Mammary epithelial cell (primary cell): ENCODE measurements at regions of chr9 and their contacts with region 1.

Region 1: DNA sequence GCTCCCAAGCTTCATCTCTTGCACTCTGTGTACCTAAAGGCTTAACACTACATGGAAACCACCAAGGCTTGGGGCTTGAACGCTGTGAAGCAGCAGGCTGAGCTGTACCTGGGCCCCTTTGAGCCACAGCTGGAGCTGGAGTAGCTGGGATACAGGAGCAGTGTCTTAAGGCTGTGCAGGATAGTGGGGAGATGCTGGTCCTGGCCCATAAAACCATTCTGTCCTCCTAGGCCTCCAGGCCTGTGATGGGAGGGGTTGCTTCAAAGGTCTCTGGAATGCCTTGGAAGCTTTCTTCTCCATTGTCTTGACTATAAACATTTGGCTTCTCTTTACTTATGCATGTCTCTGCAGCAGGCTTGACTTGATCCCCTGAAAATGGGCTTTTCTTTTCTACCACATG is 42.3 kb upstream of the DAPK1 start:
- DNase-seq: no peak
- H3K4me3 ChIP-seq: no peak overlapping the region
- H3K27ac ChIP-seq: no peak overlapping the region
- H3K4me1 ChIP-seq: no peaks in the 10 kb centered on the region
- H3K27me3 ChIP-seq: no peaks in the 10 kb centered on the region
- CTCF ChIP-seq: no peak

Region 2: GRCh38 chr9:87259543-87260518 is 195.6 kb before region 1 on chr9:
- CTCF ChIA-PET with region 1: no interaction called
- dilution Hi-C with region 1: no loop called
- in situ Hi-C with region 1: no loop called
- intact Hi-C with region 1: no loop called
- DNase-seq: no peak
- H3K4me3 ChIP-seq: no peak overlapping the region
- H3K27ac ChIP-seq: no peak overlapping the region
- H3K4me1 ChIP-seq: peaks cover 7% of the 10 kb centered on the region
- H3K27me3 ChIP-seq: no peaks in the 10 kb centered on the region
- CTCF ChIP-seq: no peak

Region 3: DNA sequence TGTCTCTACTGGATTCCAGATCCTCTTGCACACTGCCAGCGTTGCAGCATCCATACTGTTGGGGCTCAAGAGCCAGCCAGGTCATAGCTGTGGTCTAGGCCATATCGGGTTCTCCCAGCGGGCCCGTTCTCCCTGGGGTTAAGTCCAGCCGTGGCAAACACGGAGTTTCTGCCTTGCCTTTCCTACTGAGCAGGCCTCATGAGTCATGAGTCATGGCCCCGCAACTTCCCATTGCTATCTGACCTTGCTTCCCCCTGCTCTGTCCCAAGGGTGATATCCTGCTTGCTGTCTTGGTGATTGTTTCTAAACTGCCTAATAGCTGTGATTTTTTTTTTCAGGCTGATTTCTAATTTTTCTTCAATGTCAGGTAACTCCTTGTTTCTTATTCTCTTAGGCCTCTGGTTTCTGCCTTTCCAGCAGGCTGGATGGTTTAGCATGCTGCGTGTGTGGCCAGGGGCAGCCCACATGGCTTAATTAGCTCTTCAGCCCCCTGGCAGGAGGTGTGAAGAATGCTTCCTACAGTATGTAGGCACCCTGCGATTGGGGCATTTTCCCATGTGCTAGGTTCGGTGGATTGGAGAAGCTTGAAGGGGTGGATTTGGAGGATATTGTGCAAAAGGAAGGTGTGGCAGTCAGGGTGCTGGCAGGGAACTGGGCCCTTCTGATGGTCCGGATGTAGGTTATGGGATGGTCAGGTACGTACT is 61.0 kb after region 1 on chr9:
- CTCF ChIA-PET with region 1: no interaction called
- dilution Hi-C with region 1: no loop called
- in situ Hi-C with region 1: no loop called
- intact Hi-C with region 1: no loop called
- DNase-seq: no peak
- H3K4me3 ChIP-seq: no peak overlapping the region
- H3K27ac ChIP-seq: no peak overlapping the region
- H3K4me1 ChIP-seq: no peaks in the 10 kb centered on the region
- H3K27me3 ChIP-seq: no peaks in the 10 kb centered on the region
- CTCF ChIP-seq: no peak

Region 4: GRCh38 chr9:87529671-87530070 is 74.3 kb after region 1 on chr9:
- CTCF ChIA-PET with region 1: no interaction called
- dilution Hi-C with region 1: loop called (anchors 5 kb)
- in situ Hi-C with region 1: no loop called
- intact Hi-C with region 1: no loop called
- DNase-seq: no peak
- H3K4me3 ChIP-seq: no peak overlapping the region
- H3K27ac ChIP-seq: no peak overlapping the region
- H3K4me1 ChIP-seq: no peaks in the 10 kb centered on the region
- H3K27me3 ChIP-seq: no peaks in the 10 kb centered on the region
- CTCF ChIP-seq: no peak